Activated B cell treated with CpG ODN at 0.5 μM for 24 hours (primary cell): ENCODE measurements at regions of chr18 and their contacts with region 1.

Region 1: GRCh38 chr18:35231052-35231451 is 9.8 kb upstream of the ZNF397 start:
- DNase-seq: peak; percentile 49
- ATAC-seq: peak; percentile 97
- H3K4me3 Mint-ChIP-seq: peak overlapping the region; percentile 36
- H3K27ac Mint-ChIP-seq: no peak overlapping the region
- H3K4me1 Mint-ChIP-seq: peaks cover 3% of the 10 kb centered on the region
- H3K27me3 Mint-ChIP-seq: no peaks in the 10 kb centered on the region
- CTCF ChIP-seq: peak; percentile 75

Region 2: DNA sequence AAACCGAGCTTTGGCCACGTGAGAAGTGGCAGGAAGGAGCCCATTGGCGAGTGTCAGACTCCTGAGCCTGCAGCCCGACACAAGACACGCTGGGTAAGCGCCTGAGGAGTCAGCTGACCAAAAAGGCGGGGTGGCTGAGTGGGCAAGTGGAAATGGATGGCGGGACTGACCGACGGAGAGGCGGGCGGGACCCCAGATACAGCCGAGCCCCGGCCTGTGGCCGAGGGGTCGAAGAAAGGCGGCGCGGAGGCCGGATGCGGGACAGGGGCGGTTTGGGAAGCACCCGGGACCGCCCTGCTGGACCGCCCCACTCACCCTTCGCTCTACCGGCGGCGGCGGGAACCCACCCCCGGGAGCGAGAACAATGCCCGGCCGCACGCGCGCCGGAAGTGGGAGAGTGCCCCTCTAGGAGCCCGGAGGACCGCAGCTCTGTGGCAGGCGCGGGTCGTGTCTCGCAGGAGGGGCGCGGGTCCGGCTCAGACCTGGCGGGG is 36.2 kb after region 1 on chr18:
- CTCF ChIA-PET with region 1: no interaction called
- POLR2A ChIA-PET with region 1: interaction called, 3 read pairs
- intact Hi-C with region 1: loop called (anchors 5 kb)
- DNase-seq: peak; percentile 72
- ATAC-seq: peak; percentile 89
- H3K4me3 Mint-ChIP-seq: peak overlapping the region; percentile 94
- H3K27ac Mint-ChIP-seq: peak overlapping the region; percentile 93
- H3K4me1 Mint-ChIP-seq: peaks cover 26% of the 10 kb centered on the region
- H3K27me3 Mint-ChIP-seq: no peaks in the 10 kb centered on the region
- CTCF ChIP-seq: no peak

Region 3: GRCh38 chr18:35355140-35355618 is 124.1 kb after region 1 on chr18:
- CTCF ChIA-PET with region 1: interaction called, 73 read pairs
- POLR2A ChIA-PET with region 1: no interaction called
- intact Hi-C with region 1: loop called (anchors 1 kb)
- DNase-seq: no peak
- ATAC-seq: peak; percentile 100
- H3K4me3 Mint-ChIP-seq: no peak overlapping the region
- H3K27ac Mint-ChIP-seq: no peak overlapping the region
- H3K4me1 Mint-ChIP-seq: peaks cover 5% of the 10 kb centered on the region
- H3K27me3 Mint-ChIP-seq: no peaks in the 10 kb centered on the region
- CTCF ChIP-seq: no peak

Region 4: GRCh38 chr18:35386600-35387351 is 155.7 kb after region 1 on chr18:
- CTCF ChIA-PET with region 1: interaction called, 18 read pairs
- POLR2A ChIA-PET with region 1: no interaction called
- intact Hi-C with region 1: loop called (anchors 1 kb)
- DNase-seq: no peak
- ATAC-seq: peak; percentile 95
- H3K4me3 Mint-ChIP-seq: no peak overlapping the region
- H3K27ac Mint-ChIP-seq: no peak overlapping the region
- H3K4me1 Mint-ChIP-seq: peaks cover 6% of the 10 kb centered on the region
- H3K27me3 Mint-ChIP-seq: peaks cover 18% of the 10 kb centered on the region
- CTCF ChIP-seq: no peak

Region 5: GRCh38 chr18:35581898-35582641 is 351.0 kb after region 1 on chr18:
- CTCF ChIA-PET with region 1: no interaction called
- POLR2A ChIA-PET with region 1: no interaction called
- intact Hi-C with region 1: no loop called
- DNase-seq: peak; percentile 41
- ATAC-seq: peak; percentile 5
- H3K4me3 Mint-ChIP-seq: peak overlapping the region; percentile 84
- H3K27ac Mint-ChIP-seq: peak overlapping the region; percentile 84
- H3K4me1 Mint-ChIP-seq: peaks cover 40% of the 10 kb centered on the region
- H3K27me3 Mint-ChIP-seq: no peaks in the 10 kb centered on the region
- CTCF ChIP-seq: no peak

Region 6: GRCh38 chr18:35949903-35950627 is 719.0 kb after region 1 on chr18:
- CTCF ChIA-PET with region 1: no interaction called
- POLR2A ChIA-PET with region 1: no interaction called
- intact Hi-C with region 1: loop called (anchors 2 kb)
- DNase-seq: peak; percentile 43
- ATAC-seq: peak; percentile 85
- H3K4me3 Mint-ChIP-seq: peak overlapping the region; percentile 82
- H3K27ac Mint-ChIP-seq: no peak overlapping the region
- H3K4me1 Mint-ChIP-seq: peaks cover 8% of the 10 kb centered on the region
- H3K27me3 Mint-ChIP-seq: peaks cover 27% of the 10 kb centered on the region
- CTCF ChIP-seq: peak; percentile 98

Region 7: GRCh38 chr18:36284671-36285295 is 1053.7 kb after region 1 on chr18:
- CTCF ChIA-PET with region 1: no interaction called
- POLR2A ChIA-PET with region 1: no interaction called
- intact Hi-C with region 1: loop called (anchors 10 kb)
- DNase-seq: no peak
- ATAC-seq: peak; percentile 64
- H3K4me3 Mint-ChIP-seq: no peak overlapping the region
- H3K27ac Mint-ChIP-seq: no peak overlapping the region
- H3K4me1 Mint-ChIP-seq: peaks cover 2% of the 10 kb centered on the region
- H3K27me3 Mint-ChIP-seq: peaks cover 38% of the 10 kb centered on the region
- CTCF ChIP-seq: peak; percentile 72